B cell (primary cell): ENCODE measurements at regions of chr10 and their contacts with region 1.

Region 1: DNA sequence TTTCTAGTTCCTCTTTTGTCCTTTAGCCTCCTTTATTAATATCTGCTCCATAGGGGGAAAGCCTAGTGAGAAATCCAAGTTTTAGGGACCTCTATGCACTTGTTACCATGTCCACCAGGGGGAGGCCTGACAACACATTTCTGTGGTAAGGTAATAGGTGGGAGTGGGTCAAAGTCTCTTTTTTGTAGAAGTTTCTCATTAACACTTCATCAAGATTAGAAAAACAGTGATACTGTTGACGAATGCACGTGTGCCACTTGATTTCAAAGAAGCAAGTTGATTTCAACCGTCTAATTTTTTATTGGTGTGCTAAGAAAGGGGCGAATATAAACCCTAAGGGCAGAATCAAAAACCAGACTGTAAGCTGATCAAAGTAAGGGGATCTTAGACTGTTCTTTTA is 30.6 kb downstream of the CISD1 start:
- DNase-seq: peak; percentile 76
- ATAC-seq: peak; percentile 77
- H3K4me3 ChIP-seq: no peak overlapping the region
- H3K4me3 Mint-ChIP-seq: no peak overlapping the region
- H3K27ac ChIP-seq: no peak overlapping the region
- H3K27ac Mint-ChIP-seq: no peak overlapping the region
- H3K4me1 ChIP-seq: no peaks in the 10 kb centered on the region
- H3K4me1 Mint-ChIP-seq: peaks cover 3% of the 10 kb centered on the region
- H3K27me3 ChIP-seq: peaks cover 0 to 7% (median 4%) of the 10 kb centered on the region in 4 experiments
- H3K27me3 Mint-ChIP-seq: peaks cover 21% of the 10 kb centered on the region
- CTCF ChIP-seq: peak; percentile 92

Region 2: GRCh38 chr10:58177362-58177947 is 122.1 kb before region 1 on chr10:
- CTCF ChIA-PET with region 1: interaction called, 407 read pairs
- POLR2A ChIA-PET with region 1: no interaction called
- intact Hi-C with region 1: no loop called
- DNase-seq: peak; percentile 37
- ATAC-seq: peak; percentile 31
- H3K4me3 ChIP-seq: no peak overlapping the region
- H3K4me3 Mint-ChIP-seq: no peak overlapping the region
- H3K27ac ChIP-seq: no peak overlapping the region
- H3K27ac Mint-ChIP-seq: no peak overlapping the region
- H3K4me1 ChIP-seq: no peaks in the 10 kb centered on the region
- H3K4me1 Mint-ChIP-seq: no peaks in the 10 kb centered on the region
- H3K27me3 ChIP-seq: no peaks in the 10 kb centered on the region
- H3K27me3 Mint-ChIP-seq: no peaks in the 10 kb centered on the region
- CTCF ChIP-seq: peak; percentile 82

Region 3: GRCh38 chr10:58311026-58311425 is 11.4 kb after region 1 on chr10:
- CTCF ChIA-PET with region 1: interaction called, 23 read pairs
- POLR2A ChIA-PET with region 1: no interaction called
- intact Hi-C with region 1: no loop called
- DNase-seq: no peak
- ATAC-seq: no peak
- H3K4me3 ChIP-seq: no peak overlapping the region
- H3K4me3 Mint-ChIP-seq: no peak overlapping the region
- H3K27ac ChIP-seq: no peak overlapping the region
- H3K27ac Mint-ChIP-seq: no peak overlapping the region
- H3K4me1 ChIP-seq: no peaks in the 10 kb centered on the region
- H3K4me1 Mint-ChIP-seq: no peaks in the 10 kb centered on the region
- H3K27me3 ChIP-seq: peaks cover 0 to 6% (median 3%) of the 10 kb centered on the region in 4 experiments
- H3K27me3 Mint-ChIP-seq: peaks cover 30% of the 10 kb centered on the region
- CTCF ChIP-seq: no peak

Region 4: GRCh38 chr10:58334817-58335305 is 35.3 kb after region 1 on chr10 and contains the start of gene UBE2D1:
- CTCF ChIA-PET with region 1: no interaction called
- POLR2A ChIA-PET with region 1: no interaction called
- intact Hi-C with region 1: loop called (anchors 2 kb)
- DNase-seq: peak; percentile 87
- ATAC-seq: peak; percentile 97
- H3K4me3 ChIP-seq: peak within 1 kb of the TSS; percentile 77 to 96 (median 93)
- H3K4me3 Mint-ChIP-seq: peak within 1 kb of the TSS; percentile 96
- H3K27ac ChIP-seq: peak within 1 kb of the TSS; percentile 13 to 87
- H3K27ac Mint-ChIP-seq: peak within 1 kb of the TSS; percentile 91
- H3K4me1 ChIP-seq: peaks cover 13% of the 10 kb centered on the region in 2 donors
- H3K4me1 Mint-ChIP-seq: peaks cover 31% of the 10 kb centered on the region
- H3K27me3 ChIP-seq: no peaks in the 10 kb centered on the region
- H3K27me3 Mint-ChIP-seq: no peaks in the 10 kb centered on the region
- CTCF ChIP-seq: no peak
- total RNA-seq, gene UBE2D1: 12.6 and 13.5 TPM in 2 replicates

Region 5: GRCh38 chr10:58384999-58385783 is 85.6 kb after region 1 on chr10 and contains the start of gene TFAM:
- CTCF ChIA-PET with region 1: interaction called, 15 read pairs
- POLR2A ChIA-PET with region 1: no interaction called
- intact Hi-C with region 1: loop called (anchors 1 kb)
- DNase-seq: peak; percentile 97
- ATAC-seq: peak; percentile 84
- H3K4me3 ChIP-seq: peak within 1 kb of the TSS; percentile 73 to 89 (median 82)
- H3K4me3 Mint-ChIP-seq: peak within 1 kb of the TSS; percentile 92
- H3K27ac ChIP-seq: peak within 1 kb of the TSS; percentile 84 to 97
- H3K27ac Mint-ChIP-seq: peak within 1 kb of the TSS; percentile 96
- H3K4me1 ChIP-seq: peaks cover 24 to 29% of the 10 kb centered on the region in 2 donors
- H3K4me1 Mint-ChIP-seq: peaks cover 43% of the 10 kb centered on the region
- H3K27me3 ChIP-seq: no peaks in the 10 kb centered on the region
- H3K27me3 Mint-ChIP-seq: no peaks in the 10 kb centered on the region
- CTCF ChIP-seq: peak; percentile 47
- total RNA-seq, gene TFAM: 38.4 and 40.6 TPM in 2 replicates

Region 6: GRCh38 chr10:58781873-58782488 is 482.4 kb after region 1 on chr10:
- CTCF ChIA-PET with region 1: no interaction called
- POLR2A ChIA-PET with region 1: no interaction called
- intact Hi-C with region 1: loop called (anchors 10 kb)
- DNase-seq: peak; percentile 17
- ATAC-seq: no peak
- H3K4me3 ChIP-seq: no peak overlapping the region
- H3K4me3 Mint-ChIP-seq: no peak overlapping the region
- H3K27ac ChIP-seq: no peak overlapping the region
- H3K27ac Mint-ChIP-seq: no peak overlapping the region
- H3K4me1 ChIP-seq: no peaks in the 10 kb centered on the region
- H3K4me1 Mint-ChIP-seq: no peaks in the 10 kb centered on the region
- H3K27me3 ChIP-seq: no peaks in the 10 kb centered on the region
- H3K27me3 Mint-ChIP-seq: peaks cover 16% of the 10 kb centered on the region
- CTCF ChIP-seq: peak; percentile 62